Right ventricle myocardium inferior (tissue), 1 donor: ENCODE measurements at regions of chr15 and their contacts with region 1.

Region 1: GRCh38 chr15:70715840-70716485 is 47.4 kb downstream of the UACA start:
- DNase-seq: no peak
- ATAC-seq: no peak

Region 2: DNA sequence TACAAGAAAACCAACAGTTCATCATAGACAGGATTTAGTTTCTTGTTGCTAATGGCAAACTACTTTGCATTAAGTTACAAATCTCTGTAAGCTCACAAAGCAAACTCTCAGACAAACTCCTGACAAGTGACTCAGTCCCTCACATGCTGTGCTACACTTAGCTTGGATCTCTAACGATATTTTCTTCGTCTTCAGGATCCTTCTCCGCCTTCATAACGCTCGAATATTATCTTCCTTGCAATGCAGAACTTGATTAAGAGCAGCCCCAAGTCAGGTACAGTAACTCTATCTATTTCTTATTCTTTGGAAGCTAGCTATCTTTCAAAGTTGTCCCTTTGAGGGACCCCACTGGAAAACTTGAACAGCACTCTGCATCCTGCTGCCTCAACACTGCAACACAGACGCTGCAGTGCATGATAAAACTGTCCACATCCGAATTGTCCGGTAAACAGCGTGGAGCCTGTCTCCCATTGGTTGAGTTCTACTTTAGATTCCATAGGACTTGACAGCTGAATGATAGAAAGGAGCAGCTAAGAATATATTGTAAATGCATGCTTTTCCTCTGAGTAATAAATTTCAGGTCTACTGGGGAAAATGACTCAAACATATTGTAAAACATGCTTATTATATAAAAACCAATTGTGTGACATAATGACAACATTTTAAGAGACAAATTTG is 13.9 kb before region 1 on chr15:
- intact Hi-C with region 1: loop called (anchors 2 kb)
- DNase-seq: no peak
- ATAC-seq: peak; percentile 71

Region 3: GRCh38 chr15:70748281-70748747 is 32.4 kb after region 1 on chr15:
- intact Hi-C with region 1: no loop called
- DNase-seq: peak; percentile 75
- ATAC-seq: peak; percentile 87

Region 4: DNA sequence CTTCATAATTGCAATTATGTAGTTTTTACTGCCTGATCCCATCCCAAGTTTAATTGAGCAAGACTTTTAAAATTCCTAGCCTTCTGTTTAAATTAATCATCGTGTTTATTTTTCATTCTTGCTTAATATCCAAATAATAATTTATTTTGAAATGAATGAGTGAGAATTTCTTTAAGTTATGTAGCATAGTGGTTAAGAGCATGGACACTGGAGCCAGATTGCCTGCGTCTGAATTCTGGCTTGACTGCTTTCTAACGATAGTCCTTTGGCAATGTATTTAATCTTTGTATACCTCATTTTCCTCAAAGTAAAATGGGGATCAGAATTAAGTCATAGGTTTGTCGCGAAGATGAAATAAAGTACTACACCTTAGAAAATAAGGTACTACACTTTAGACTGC is 248.1 kb after region 1 on chr15:
- intact Hi-C with region 1: no loop called
- DNase-seq: no peak
- ATAC-seq: no peak